T-cell (primary cell): ENCODE measurements at regions of chr3 and their contacts with region 1.

Region 1: GRCh38 chr3:36514171-36514570 is 133.9 kb downstream of the STAC start:
- DNase-seq: no peak
- ATAC-seq: no peak
- H3K4me3 ChIP-seq: no peak overlapping the region
- H3K4me3 Mint-ChIP-seq: no peak overlapping the region
- H3K27ac ChIP-seq: no peak overlapping the region
- H3K27ac Mint-ChIP-seq: no peak overlapping the region
- H3K4me1 ChIP-seq: no peaks in the 10 kb centered on the region
- H3K4me1 Mint-ChIP-seq: no peaks in the 10 kb centered on the region
- H3K27me3 ChIP-seq: no peaks in the 10 kb centered on the region
- H3K27me3 Mint-ChIP-seq: peaks cover 0 to 2% of the 10 kb centered on the region in 2 donors

Region 2: DNA sequence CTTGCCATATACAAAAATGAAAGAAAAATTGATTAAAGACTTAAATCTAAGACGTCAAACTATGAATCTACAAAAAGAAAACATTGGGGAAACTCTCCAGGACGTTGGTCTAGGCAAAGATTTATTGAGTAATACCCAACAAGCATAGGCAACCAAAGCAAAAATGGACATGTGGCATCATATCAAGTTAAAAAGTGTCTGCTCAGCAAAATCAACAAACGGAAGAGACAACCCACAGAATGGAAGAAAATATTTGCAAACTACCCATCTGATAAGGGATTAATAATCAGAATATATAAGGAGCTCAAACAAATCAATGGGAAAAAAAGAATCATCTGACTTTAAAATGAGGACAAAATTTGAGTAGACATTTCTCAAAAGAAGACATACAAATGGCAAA is 89.3 kb after region 1 on chr3:
- CTCF ChIA-PET with region 1: no interaction called
- POLR2A ChIA-PET with region 1: no interaction called
- DNase-seq: no peak
- ATAC-seq: no peak
- H3K4me3 ChIP-seq: no peak overlapping the region
- H3K4me3 Mint-ChIP-seq: no peak overlapping the region
- H3K27ac ChIP-seq: no peak overlapping the region
- H3K27ac Mint-ChIP-seq: no peak overlapping the region
- H3K4me1 ChIP-seq: no peaks in the 10 kb centered on the region
- H3K4me1 Mint-ChIP-seq: no peaks in the 10 kb centered on the region
- H3K27me3 ChIP-seq: no peaks in the 10 kb centered on the region
- H3K27me3 Mint-ChIP-seq: peaks cover 12 to 17% of the 10 kb centered on the region in 2 donors

Region 3: DNA sequence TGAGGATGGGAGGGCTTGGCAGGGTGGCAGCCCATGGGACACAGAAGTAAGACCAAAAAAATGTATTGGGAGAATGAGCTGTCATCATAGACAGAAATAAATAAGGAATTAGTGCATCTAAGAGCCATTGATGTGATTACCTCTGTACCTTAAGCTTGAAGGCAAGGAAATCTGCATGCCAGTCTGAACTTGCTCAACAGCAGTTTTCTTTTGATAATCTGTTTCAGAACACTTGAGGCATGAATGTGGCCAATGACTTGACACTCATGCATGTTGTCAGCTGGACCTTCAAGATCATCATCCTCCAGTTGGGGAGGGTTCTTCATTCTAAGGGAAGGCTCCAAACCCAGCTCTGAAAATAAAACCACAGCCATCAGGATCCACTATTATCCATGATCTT is 101.7 kb after region 1 on chr3:
- CTCF ChIA-PET with region 1: no interaction called
- POLR2A ChIA-PET with region 1: interaction called in 1 of 2 experiments, 11 read pairs
- DNase-seq: no peak
- ATAC-seq: no peak
- H3K4me3 ChIP-seq: no peak overlapping the region
- H3K4me3 Mint-ChIP-seq: no peak overlapping the region
- H3K27ac ChIP-seq: no peak overlapping the region
- H3K27ac Mint-ChIP-seq: no peak overlapping the region
- H3K4me1 ChIP-seq: no peaks in the 10 kb centered on the region
- H3K4me1 Mint-ChIP-seq: no peaks in the 10 kb centered on the region
- H3K27me3 ChIP-seq: no peaks in the 10 kb centered on the region
- H3K27me3 Mint-ChIP-seq: peaks cover 9 to 16% of the 10 kb centered on the region in 2 donors

Region 4: DNA sequence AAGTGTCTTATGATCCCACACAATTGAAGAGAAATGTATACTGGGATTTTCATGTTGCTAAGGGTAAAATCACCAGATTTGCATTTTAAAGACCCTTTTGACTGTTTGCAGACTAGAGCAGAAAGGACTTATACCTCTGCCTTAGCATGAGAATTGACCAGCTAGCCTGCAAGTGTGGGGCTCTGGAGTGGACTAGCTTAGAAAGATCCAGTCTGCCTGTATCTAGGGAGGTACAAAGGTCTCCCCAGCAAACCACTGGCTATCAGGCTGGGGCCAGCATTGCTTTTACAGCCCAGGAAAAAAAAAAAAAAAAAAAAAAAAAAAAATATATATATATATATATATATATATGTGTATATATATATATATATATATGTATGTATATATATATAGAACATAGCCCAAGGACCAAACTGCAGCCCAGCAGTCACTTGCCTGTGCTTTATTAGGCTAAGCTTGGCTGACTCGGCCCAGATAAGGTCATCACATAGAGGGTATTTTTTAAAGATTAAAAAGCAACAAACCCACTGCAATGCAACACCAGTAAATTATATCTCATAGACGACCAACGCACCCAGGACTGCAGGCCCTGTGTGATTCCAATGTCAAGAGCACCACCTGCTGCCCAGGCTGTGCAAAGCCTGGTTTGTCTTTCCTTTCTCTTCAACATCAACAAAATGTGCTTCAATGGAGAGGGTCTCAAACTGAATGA is 186.5 kb after region 1 on chr3:
- CTCF ChIA-PET with region 1: no interaction called
- POLR2A ChIA-PET with region 1: no interaction called
- DNase-seq: peak in 13 of 35 experiments; percentile 3 to 46 (median 9)
- ATAC-seq: no peak
- H3K4me3 ChIP-seq: no peak overlapping the region
- H3K4me3 Mint-ChIP-seq: no peak overlapping the region
- H3K27ac ChIP-seq: no peak overlapping the region
- H3K27ac Mint-ChIP-seq: no peak overlapping the region
- H3K4me1 ChIP-seq: no peaks in the 10 kb centered on the region
- H3K4me1 Mint-ChIP-seq: no peaks in the 10 kb centered on the region
- H3K27me3 ChIP-seq: peaks cover 0 to 5% of the 10 kb centered on the region in 2 experiments
- H3K27me3 Mint-ChIP-seq: peaks cover 3 to 5% of the 10 kb centered on the region in 2 donors

Region 5: DNA sequence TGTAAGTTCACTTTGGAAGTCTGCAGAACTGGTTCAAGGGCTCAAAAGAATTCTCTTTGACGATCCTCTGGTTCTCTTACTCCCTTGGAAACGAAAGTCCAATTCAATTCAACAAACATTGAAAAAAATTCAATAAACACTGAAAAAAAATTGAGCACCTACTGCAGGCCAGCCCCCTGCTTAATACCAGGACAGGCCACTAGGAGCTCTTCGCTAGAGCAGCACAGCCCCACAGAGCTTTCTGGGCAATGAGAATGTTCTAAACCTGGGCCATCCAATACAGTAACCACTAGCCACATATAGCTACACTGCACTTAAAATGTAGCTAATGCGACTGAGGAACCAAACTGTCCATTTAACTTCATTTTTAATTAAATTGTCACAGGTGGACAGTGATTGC is 300.6 kb after region 1 on chr3:
- CTCF ChIA-PET with region 1: no interaction called
- POLR2A ChIA-PET with region 1: no interaction called
- DNase-seq: no peak
- ATAC-seq: no peak
- H3K4me3 ChIP-seq: no peak overlapping the region
- H3K4me3 Mint-ChIP-seq: no peak overlapping the region
- H3K27ac ChIP-seq: no peak overlapping the region
- H3K27ac Mint-ChIP-seq: no peak overlapping the region
- H3K4me1 ChIP-seq: no peaks in the 10 kb centered on the region
- H3K4me1 Mint-ChIP-seq: no peaks in the 10 kb centered on the region
- H3K27me3 ChIP-seq: no peaks in the 10 kb centered on the region
- H3K27me3 Mint-ChIP-seq: peaks cover 2 to 4% of the 10 kb centered on the region in 2 donors